ENCODE measurements at regions of chr5 and their contacts with region 1.

Region 1: GRCh38 chr5:98492258-98492657 is 281.2 kb upstream of the RGMB start:
- DNase-seq: no peak
- ATAC-seq: no peak
- H3K4me3 ChIP-seq: no peak overlapping the region
- H3K27ac ChIP-seq: no peak overlapping the region
- H3K4me1 ChIP-seq: no peaks in the 10 kb centered on the region
- H3K27me3 ChIP-seq: no peaks in the 10 kb centered on the region
- CTCF ChIP-seq: no peak
- POLR2A ChIP-seq: no peak

Region 2: DNA sequence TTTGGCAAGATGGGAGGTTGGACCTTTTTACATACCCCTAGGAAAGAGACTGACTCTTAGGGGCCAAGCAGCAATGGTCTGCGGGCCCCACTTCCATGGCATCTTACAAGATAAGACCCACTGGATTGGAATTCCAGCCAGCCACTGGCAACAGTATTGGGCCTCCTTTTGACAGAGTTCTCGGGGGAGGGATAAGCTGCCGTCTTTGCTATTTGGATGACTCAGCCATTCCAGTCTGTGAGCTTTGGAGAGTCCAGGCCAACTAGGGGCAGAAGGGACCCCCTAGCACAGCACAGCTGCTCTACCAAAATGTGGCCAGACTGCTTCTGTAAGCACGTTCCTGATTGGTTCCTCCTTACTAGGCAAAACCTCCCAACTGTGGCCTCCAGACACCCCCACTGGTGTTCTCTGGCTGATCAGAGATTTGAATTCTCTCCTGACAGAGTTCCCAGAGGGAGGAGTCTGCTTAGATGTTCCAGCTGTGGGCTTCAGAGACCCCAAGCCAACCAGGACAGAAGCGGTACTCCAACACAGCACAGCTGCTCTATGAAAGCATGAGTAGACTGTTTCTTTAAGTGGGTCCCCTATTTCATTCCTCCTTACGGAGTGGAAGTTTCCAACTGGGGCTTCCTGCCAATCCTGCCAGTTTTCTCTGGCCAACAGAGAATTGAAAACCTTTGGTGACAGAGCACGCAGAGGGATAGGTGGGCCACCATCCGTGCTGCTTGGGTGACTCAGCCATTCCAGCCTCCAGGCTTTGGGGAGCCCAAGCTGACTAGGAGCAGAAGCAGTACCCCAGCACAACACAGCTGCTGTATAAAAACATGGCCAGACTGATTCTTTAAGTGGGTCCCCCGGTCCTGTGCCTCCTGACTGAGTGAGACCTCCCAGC is 637.1 kb before region 1 on chr5:
- intact Hi-C with region 1: loop called in 1 of 10 experiments (anchors 5 kb)
- DNase-seq: peak in 3 of 5 donors; percentile 25 to 45 (median 30)
- ATAC-seq: peak in 3 of 4 donors; percentile 36 to 87 (median 53)
- H3K4me3 ChIP-seq: no peak overlapping the region
- H3K27ac ChIP-seq: no peak overlapping the region
- H3K4me1 ChIP-seq: no peaks in the 10 kb centered on the region
- H3K27me3 ChIP-seq: no peaks in the 10 kb centered on the region
- CTCF ChIP-seq: no peak
- POLR2A ChIP-seq: no peak

Region 3: GRCh38 chr5:98510143-98510985 is 18.1 kb after region 1 on chr5:
- intact Hi-C with region 1: no loop called
- DNase-seq: no peak
- ATAC-seq: no peak
- H3K4me3 ChIP-seq: no peak overlapping the region
- H3K27ac ChIP-seq: no peak overlapping the region
- H3K4me1 ChIP-seq: no peaks in the 10 kb centered on the region
- H3K27me3 ChIP-seq: no peaks in the 10 kb centered on the region
- CTCF ChIP-seq: no peak
- POLR2A ChIP-seq: no peak

Region 4: DNA sequence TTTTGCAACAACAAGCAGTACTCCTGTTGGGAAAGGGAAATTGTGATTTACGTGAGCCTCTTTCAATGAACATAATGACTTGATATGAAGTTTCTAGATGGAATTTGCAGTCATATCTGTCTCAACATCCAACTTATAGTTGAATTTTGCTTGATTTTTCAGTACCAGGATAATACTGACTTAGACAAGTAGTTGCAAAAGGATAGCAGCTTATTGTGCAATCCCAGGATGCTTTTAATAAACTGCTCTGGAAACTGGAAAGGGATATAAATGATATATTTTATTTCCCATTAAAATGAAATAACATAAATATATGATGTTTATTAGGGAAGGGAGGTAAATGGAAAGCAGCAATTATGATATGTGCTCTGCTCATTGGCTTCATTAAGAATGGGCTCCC is 106.8 kb after region 1 on chr5:
- intact Hi-C with region 1: no loop called
- DNase-seq: no peak
- ATAC-seq: no peak
- H3K4me3 ChIP-seq: no peak overlapping the region
- H3K27ac ChIP-seq: no peak overlapping the region
- H3K4me1 ChIP-seq: no peaks in the 10 kb centered on the region
- H3K27me3 ChIP-seq: no peaks in the 10 kb centered on the region
- CTCF ChIP-seq: no peak
- POLR2A ChIP-seq: no peak

Region 5: DNA sequence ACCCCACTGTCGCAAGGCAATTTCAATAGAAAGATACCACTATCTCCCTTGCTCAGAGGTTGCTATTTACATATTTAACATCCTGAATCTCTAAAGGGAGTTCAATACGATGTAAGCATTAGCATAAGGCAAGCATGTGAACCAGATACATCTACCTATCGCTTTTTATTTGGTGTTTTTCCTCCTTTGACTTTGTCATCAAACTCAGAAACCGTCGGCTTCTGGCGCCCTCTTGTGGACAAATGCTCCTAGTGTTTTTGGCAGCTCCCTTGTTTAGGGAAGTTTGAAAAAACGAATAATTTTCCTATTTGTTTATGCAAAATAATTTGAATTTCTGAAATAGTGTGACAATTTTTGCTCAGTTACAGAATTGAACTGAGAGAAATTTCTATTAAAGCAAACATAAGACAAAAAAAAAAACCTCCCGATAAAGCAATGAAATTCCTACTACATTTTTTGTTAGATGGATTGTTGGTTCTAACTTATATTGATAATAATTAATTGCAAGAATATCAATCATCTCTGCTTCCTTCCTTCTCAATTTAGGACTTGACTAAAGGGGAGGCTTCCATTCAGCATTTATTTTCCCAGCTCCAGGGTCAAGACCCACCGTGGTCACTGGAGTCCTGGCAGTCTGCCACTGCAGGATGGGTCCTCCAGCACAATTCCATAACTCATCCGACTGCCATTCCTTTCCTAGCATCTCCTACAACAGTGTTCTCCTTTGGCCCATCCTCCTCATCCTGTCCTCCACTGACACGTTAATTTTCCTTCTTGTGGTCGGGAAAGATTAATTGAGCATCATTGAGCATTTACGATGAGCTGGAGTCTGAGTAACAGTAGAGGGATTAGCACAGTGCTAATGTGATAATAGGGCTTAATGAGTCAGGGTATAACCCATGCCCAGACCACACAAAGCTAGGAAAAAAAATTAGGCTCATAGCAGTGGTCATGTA is 568.3 kb after region 1 on chr5:
- intact Hi-C with region 1: no loop called
- DNase-seq: peak; percentile 51 to 84 (median 53)
- ATAC-seq: no peak
- H3K4me3 ChIP-seq: peak overlapping the region in 1 of 12 donors; percentile 5
- H3K27ac ChIP-seq: no peak overlapping the region
- H3K4me1 ChIP-seq: peaks cover 0 to 9% (median 0%) of the 10 kb centered on the region in 12 donors
- H3K27me3 ChIP-seq: no peaks in the 10 kb centered on the region
- CTCF ChIP-seq: peak; percentile 76 to 93 (median 86)
- POLR2A ChIP-seq: no peak